H1 (cell line): ENCODE measurements at regions of chr5 and their contacts with region 1.

Region 1: GRCh38 chr5:178786859-178787760 is 56.7 kb upstream of the ZNF354A start:
- DNase-seq: no peak
- H3K4me3 ChIP-seq: no peak overlapping the region
- H3K27ac ChIP-seq: no peak overlapping the region
- H3K4me1 ChIP-seq: no peaks in the 10 kb centered on the region
- H3K27me3 ChIP-seq: no peaks in the 10 kb centered on the region
- CTCF ChIP-seq: no peak
- EP300 ChIP-seq: no peak
- POLR2A ChIP-seq: no peak
- RAD21 ChIP-seq: no peak

Region 2: GRCh38 chr5:178496642-178497041 is 290.5 kb before region 1 on chr5:
- CTCF ChIA-PET with region 1: no interaction called
- POLR2A ChIA-PET with region 1: no interaction called
- DNase-seq: no peak
- H3K4me3 ChIP-seq: no peak overlapping the region
- H3K27ac ChIP-seq: no peak overlapping the region
- H3K4me1 ChIP-seq: no peaks in the 10 kb centered on the region
- H3K27me3 ChIP-seq: no peaks in the 10 kb centered on the region
- CTCF ChIP-seq: no peak
- EP300 ChIP-seq: no peak
- POLR2A ChIP-seq: no peak
- RAD21 ChIP-seq: no peak

Region 3: DNA sequence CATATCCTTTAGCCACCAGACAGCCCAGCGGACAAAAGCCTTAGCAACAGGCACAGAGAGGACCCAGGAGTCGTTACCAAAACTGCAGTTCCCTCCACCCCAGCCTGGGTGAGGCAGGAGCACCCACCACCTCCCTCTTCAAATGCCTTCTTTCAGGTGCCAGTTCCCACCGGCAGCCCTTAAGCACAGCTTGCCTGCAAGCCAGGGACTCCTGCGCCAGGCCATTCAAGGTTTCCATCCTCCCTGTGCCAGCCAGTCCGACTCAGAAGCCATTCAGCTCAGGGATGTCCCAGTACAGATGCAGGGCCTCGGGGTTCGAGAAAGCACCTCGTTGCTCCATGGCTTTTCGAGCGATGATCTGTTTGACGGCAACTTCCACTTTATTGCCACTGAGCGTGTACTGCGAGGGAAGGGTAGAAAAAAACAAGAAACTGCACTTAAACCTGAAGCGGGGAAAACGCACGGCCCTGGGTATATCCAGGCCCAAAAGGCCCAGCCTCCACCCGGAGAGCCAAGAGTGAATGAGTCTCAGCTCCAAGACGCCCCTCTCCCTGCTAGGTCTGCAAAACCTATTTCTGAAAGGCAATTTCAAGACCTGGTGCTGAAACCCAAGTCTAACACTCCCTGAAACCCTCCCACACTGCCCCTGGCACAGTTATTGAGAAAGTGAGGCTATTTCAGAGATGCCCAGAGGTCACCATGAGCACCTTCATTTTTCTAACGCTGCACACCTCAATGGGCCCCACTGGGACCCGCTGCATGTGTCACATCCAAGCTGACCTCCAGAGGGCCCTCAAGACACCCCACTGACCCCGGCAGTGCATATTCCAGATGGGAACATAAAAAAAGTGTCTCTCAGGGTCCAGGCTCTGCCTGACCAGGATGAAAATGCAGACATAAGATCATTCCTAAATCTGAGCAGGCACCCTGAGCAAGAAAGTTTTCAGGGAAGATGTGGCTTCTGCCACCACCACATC is 19.9 kb before region 1 on chr5:
- CTCF ChIA-PET with region 1: interaction called, 10 read pairs
- POLR2A ChIA-PET with region 1: no interaction called
- DNase-seq: no peak
- H3K4me3 ChIP-seq: no peak overlapping the region
- H3K27ac ChIP-seq: no peak overlapping the region
- H3K4me1 ChIP-seq: no peaks in the 10 kb centered on the region
- H3K27me3 ChIP-seq: no peaks in the 10 kb centered on the region
- CTCF ChIP-seq: peak in 2 of 3 experiments; percentile 16; a peak in 2 of 4 replicates
- EP300 ChIP-seq: no peak
- POLR2A ChIP-seq: no peak
- RAD21 ChIP-seq: peak; percentile 4 to 20; a peak in 1 of 4 replicates

Region 4: GRCh38 chr5:179265514-179266290 is 478.6 kb after region 1 on chr5:
- CTCF ChIA-PET with region 1: no interaction called
- POLR2A ChIA-PET with region 1: no interaction called
- DNase-seq: peak in 1 of 2 experiments; percentile 71
- H3K4me3 ChIP-seq: no peak overlapping the region
- H3K27ac ChIP-seq: no peak overlapping the region
- H3K4me1 ChIP-seq: peaks cover 0 to 20% (median 11%) of the 10 kb centered on the region in 4 experiments; a peak in 6 of 7 replicates
- H3K27me3 ChIP-seq: no peaks in the 10 kb centered on the region
- CTCF ChIP-seq: no peak
- EP300 ChIP-seq: no peak
- POLR2A ChIP-seq: no peak
- RAD21 ChIP-seq: no peak